GM12878 (cell line): ENCODE measurements at regions of chr12 and their contacts with region 1.

Region 1: DNA sequence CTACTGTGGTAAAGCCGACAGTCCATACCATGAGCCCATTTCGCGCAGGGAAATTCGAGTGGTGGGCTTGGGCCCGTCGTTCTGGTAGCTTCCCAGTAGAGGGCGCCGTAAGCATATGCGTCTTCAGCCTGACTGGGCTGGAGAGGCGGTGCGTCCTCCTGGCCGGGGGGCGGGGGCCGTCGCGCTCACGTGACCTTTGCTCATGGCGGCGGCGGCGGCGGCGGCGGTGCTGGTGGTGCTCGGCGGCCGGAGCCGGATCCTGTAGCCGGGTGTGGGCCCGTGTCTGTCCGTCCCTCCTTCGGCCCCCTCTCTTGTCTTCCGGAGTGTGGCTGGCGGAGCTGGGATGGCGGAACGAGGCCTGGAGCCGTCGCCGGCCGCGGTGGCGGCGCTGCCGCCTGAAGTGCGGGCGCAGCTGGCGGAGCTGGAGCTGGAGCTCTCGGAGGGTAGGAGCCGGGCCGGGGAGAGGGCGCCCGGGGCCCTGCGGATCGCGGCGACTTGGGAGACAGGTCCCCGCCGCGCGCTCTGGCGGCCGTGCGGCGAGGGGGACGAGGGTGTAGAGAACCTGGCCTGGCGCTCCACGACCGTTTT is at the start of gene DIP2B:
- DNase-seq: peak; percentile 50
- ATAC-seq: peak; percentile 87
- H3K4me3 ChIP-seq: peak within 1 kb of the TSS; percentile 96
- H3K27ac ChIP-seq: peak within 1 kb of the TSS; percentile 89
- H3K4me1 ChIP-seq: peaks cover 21% of the 10 kb centered on the region
- H3K27me3 ChIP-seq: no peaks in the 10 kb centered on the region
- CTCF ChIP-seq: peak; percentile 90 to 95 (median 93); a peak in 5 of 6 replicates
- EP300 ChIP-seq: no peak
- POLR2A ChIP-seq: peak; percentile 85
- RAD21 ChIP-seq: peak; percentile 96
- polyA plus RNA-seq, gene DIP2B: 4.5 to 4.6 TPM

Region 2: DNA sequence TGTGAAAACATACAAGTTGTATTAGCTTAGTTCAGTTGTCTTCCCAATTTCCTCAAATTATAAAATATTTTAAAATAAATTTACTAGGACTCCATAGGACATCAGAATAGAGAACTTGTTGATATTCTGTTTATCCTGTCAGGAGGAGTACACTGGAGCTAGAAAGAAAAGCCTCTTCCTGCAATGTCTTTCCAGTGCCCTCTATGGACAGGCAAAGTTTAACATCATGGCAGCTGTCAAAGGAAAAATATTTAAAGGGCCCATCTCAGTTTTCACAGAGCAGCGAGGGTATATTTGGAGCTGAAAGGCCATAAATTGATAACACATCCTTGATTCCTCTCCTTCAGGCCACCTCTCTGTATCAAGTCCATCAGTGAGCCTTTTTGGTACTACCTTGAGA is 18.9 kb after region 1 on chr12:
- CTCF ChIA-PET with region 1: interaction called, 86 read pairs
- POLR2A ChIA-PET with region 1: interaction called, 58 read pairs
- RAD21 ChIA-PET with region 1: interaction called, 96 read pairs
- SMC1A ChIA-PET with region 1: interaction called, 85 read pairs
- in situ Hi-C with region 1: no loop called
- intact Hi-C with region 1: no loop called
- DNase-seq: no peak
- ATAC-seq: no peak
- H3K4me3 ChIP-seq: no peak overlapping the region
- H3K27ac ChIP-seq: no peak overlapping the region
- H3K4me1 ChIP-seq: peaks cover 33% of the 10 kb centered on the region
- H3K27me3 ChIP-seq: no peaks in the 10 kb centered on the region
- CTCF ChIP-seq: no peak
- EP300 ChIP-seq: no peak
- POLR2A ChIP-seq: no peak
- RAD21 ChIP-seq: no peak

Region 3: GRCh38 chr12:50550530-50551223 is 45.8 kb after region 1 on chr12:
- CTCF ChIA-PET with region 1: interaction called, 5 read pairs
- POLR2A ChIA-PET with region 1: interaction called, 3 read pairs
- RAD21 ChIA-PET with region 1: interaction called, 6 read pairs
- SMC1A ChIA-PET with region 1: interaction called, 14 read pairs
- in situ Hi-C with region 1: no loop called
- intact Hi-C with region 1: no loop called
- DNase-seq: no peak
- ATAC-seq: no peak
- H3K4me3 ChIP-seq: no peak overlapping the region
- H3K27ac ChIP-seq: no peak overlapping the region
- H3K4me1 ChIP-seq: no peaks in the 10 kb centered on the region; the same call in 1 of the 2 replicates
- H3K27me3 ChIP-seq: no peaks in the 10 kb centered on the region
- CTCF ChIP-seq: no peak
- EP300 ChIP-seq: no peak
- POLR2A ChIP-seq: no peak
- RAD21 ChIP-seq: no peak

Region 4: DNA sequence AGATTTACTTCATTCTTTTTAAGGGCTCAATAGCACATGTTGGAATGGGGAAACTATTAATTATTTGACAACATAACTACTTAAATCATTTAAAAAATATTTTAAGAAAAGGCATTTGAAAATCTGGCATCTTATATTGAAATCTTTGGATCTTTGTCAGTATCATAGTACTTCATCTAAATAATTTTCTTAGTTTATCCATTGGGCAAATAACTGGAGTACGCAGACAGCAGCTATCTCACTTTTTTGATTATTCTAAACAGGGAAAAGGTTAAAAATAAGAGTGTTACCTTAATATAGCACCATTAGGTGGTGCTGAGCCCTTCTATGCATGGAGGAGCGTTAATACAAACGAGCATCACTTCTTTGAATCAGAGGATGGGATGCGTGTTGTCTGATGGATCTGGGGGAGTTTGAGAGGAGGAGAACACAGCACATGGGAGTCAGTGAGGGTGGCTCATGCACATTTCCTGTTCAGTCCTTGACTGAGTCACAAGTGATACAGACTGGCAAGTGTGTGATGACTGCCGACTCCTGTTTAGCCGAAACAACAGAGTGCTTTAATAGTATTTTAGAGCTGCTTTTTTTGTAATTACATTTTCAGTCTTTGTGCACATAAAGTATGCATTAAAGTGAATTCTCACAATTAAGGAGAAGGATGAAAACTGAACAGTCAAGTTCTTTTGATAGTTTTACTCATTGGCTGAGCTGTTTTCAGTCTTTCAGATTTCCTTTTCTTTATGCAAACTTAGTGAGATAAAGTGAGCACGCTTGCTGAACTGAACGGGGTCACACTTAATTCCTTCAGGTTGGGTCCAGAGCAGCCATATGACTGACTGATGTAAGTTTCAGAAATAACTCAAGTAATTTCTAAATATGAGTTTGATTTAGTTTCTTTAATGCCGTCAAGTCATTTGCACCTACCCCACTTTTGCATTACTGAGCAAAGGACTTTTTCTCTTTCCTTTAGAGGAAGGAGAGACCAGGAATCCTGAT is 92.6 kb after region 1 on chr12:
- CTCF ChIA-PET with region 1: interaction called, 5 read pairs
- POLR2A ChIA-PET with region 1: interaction called, 7 read pairs
- RAD21 ChIA-PET with region 1: interaction called, 8 read pairs
- SMC1A ChIA-PET with region 1: interaction called, 43 read pairs
- in situ Hi-C with region 1: no loop called
- intact Hi-C with region 1: no loop called
- DNase-seq: peak; percentile 55
- ATAC-seq: peak; percentile 97
- H3K4me3 ChIP-seq: peak overlapping the region; percentile 23; the same call in 1 of the 2 replicates
- H3K27ac ChIP-seq: peak overlapping the region; percentile 74
- H3K4me1 ChIP-seq: peaks cover 3% of the 10 kb centered on the region; the same call in 1 of the 2 replicates
- H3K27me3 ChIP-seq: no peaks in the 10 kb centered on the region
- CTCF ChIP-seq: no peak; a peak in 1 of 6 replicates
- EP300 ChIP-seq: no peak
- POLR2A ChIP-seq: peak; percentile 62
- RAD21 ChIP-seq: 0 out of 2 replicates have a peak, but pooled peaks have one; percentile 14

Region 5: GRCh38 chr12:50661300-50662115 is 156.6 kb after region 1 on chr12:
- CTCF ChIA-PET with region 1: interaction called, 76 read pairs
- POLR2A ChIA-PET with region 1: interaction called, 8 read pairs
- RAD21 ChIA-PET with region 1: interaction called, 42 read pairs
- SMC1A ChIA-PET with region 1: interaction called, 35 read pairs
- in situ Hi-C with region 1: no loop called
- intact Hi-C with region 1: no loop called
- DNase-seq: peak; percentile 72
- ATAC-seq: peak; percentile 76
- H3K4me3 ChIP-seq: no peak overlapping the region
- H3K27ac ChIP-seq: peak overlapping the region; percentile 83
- H3K4me1 ChIP-seq: peaks cover 50% of the 10 kb centered on the region
- H3K27me3 ChIP-seq: no peaks in the 10 kb centered on the region
- CTCF ChIP-seq: no peak
- EP300 ChIP-seq: peak; percentile 40 to 55; a peak in 2 of 4 replicates
- POLR2A ChIP-seq: no peak
- RAD21 ChIP-seq: no peak

Region 6: DNA sequence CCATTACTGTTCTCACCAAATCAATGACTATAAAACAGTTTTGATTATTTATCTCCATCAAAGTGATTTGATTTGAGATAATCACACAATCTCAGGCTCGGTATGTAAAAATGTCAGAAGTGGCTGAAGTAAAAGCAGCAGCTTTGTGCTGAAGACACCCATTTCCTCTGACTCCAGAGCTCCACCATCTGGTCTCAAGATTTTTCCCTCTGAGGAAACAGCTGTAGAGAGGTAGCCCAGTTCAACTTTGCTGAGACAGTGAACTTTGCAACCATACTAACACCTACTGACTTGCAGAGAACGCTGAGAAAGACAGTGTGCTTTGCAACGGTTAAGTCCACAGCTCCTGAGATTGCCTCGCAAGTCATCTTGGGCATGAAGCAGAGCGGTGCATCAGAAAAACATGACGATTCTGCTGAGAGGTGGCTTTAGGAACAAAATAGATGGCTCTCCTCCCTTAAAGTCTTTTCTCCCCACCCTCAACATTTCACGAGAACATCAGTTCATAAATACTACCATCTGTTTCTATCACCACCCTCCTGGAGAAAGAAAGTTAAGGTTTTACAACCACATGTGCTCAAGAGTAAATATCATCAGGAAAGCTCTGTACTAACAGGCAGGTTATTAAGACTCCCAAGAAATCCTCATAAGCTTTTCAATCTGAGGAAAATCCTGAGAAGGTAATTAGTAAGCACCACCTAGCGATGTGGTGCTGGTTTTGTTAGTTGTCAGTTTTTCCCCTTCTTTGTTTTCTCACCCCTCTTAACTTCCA is 482.3 kb after region 1 on chr12:
- CTCF ChIA-PET with region 1: interaction called, 11 read pairs
- POLR2A ChIA-PET with region 1: no interaction called
- RAD21 ChIA-PET with region 1: interaction called, 3 read pairs
- SMC1A ChIA-PET with region 1: interaction called, 4 read pairs
- in situ Hi-C with region 1: no loop called
- intact Hi-C with region 1: no loop called
- DNase-seq: no peak
- ATAC-seq: peak; percentile 69
- H3K4me3 ChIP-seq: no peak overlapping the region
- H3K27ac ChIP-seq: no peak overlapping the region
- H3K4me1 ChIP-seq: peaks cover 17% of the 10 kb centered on the region
- H3K27me3 ChIP-seq: no peaks in the 10 kb centered on the region
- CTCF ChIP-seq: peak; percentile 45 to 68 (median 64); a peak in 5 of 6 replicates
- EP300 ChIP-seq: no peak
- POLR2A ChIP-seq: no peak
- RAD21 ChIP-seq: peak; percentile 77